ENCODE measurements at regions of chr18 and their contacts with region 1.

Region 1: GRCh38 chr18:52409727-52410126 is 69.7 kb downstream of the DCC start:
- DNase-seq: no peak
- ATAC-seq: no peak
- H3K4me3 ChIP-seq: no peak overlapping the region
- H3K27ac ChIP-seq: no peak overlapping the region
- H3K4me1 ChIP-seq: no peaks in the 10 kb centered on the region
- H3K27me3 ChIP-seq: no peaks in the 10 kb centered on the region
- CTCF ChIP-seq: no peak
- POLR2A ChIP-seq: no peak

Region 2: DNA sequence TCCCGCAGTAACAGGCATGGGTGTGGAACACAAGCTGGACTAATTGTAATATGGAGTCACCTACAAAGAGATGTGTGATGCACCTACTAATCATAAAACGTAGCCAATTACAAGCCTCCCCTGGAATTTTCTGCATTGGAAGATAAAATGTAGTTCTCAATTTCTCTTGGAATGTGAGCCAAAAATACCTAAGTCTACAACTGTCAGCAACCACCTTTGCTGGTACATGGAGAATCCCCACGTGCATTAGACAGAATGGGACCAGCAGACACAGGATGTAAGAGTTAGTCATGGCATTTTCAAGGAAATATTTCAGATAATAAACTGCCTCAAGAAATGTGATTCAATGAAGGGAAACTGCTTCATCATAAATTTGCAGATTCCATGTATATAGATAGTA is 155.4 kb before region 1 on chr18:
- in situ Hi-C with region 1: no loop called
- intact Hi-C with region 1: no loop called
- DNase-seq: no peak
- ATAC-seq: no peak
- H3K4me3 ChIP-seq: no peak overlapping the region
- H3K27ac ChIP-seq: no peak overlapping the region
- H3K4me1 ChIP-seq: no peaks in the 10 kb centered on the region
- H3K27me3 ChIP-seq: no peaks in the 10 kb centered on the region
- CTCF ChIP-seq: no peak
- POLR2A ChIP-seq: no peak

Region 3: GRCh38 chr18:52499644-52500043 is 89.9 kb after region 1 on chr18:
- in situ Hi-C with region 1: loop called in 1 of 4 experiments (anchors 25 kb)
- intact Hi-C with region 1: no loop called
- DNase-seq: no peak
- ATAC-seq: no peak
- H3K4me3 ChIP-seq: no peak overlapping the region
- H3K27ac ChIP-seq: no peak overlapping the region
- H3K4me1 ChIP-seq: no peaks in the 10 kb centered on the region
- H3K27me3 ChIP-seq: no peaks in the 10 kb centered on the region
- CTCF ChIP-seq: no peak
- POLR2A ChIP-seq: no peak